GM10248 (cell line): ENCODE measurements at regions of chr9 and their contacts with region 1.

Region 1: GRCh38 chr9:36064448-36065037 is 27.8 kb downstream of the RECK start:
- DNase-seq: no peak
- CTCF ChIP-seq: no peak

Region 2: GRCh38 chr9:36074870-36075532 is 10.5 kb after region 1 on chr9:
- CTCF ChIA-PET with region 1: interaction called, 13 read pairs
- POLR2A ChIA-PET with region 1: no interaction called
- DNase-seq: no peak
- CTCF ChIP-seq: no peak